Activated CD4-positive, alpha-beta memory T cell treated with anti-CD3 and anti-CD28 coated beads for 36 hours (primary cell): ENCODE measurements at regions of chr22 and their contacts with region 1.

Region 1: DNA sequence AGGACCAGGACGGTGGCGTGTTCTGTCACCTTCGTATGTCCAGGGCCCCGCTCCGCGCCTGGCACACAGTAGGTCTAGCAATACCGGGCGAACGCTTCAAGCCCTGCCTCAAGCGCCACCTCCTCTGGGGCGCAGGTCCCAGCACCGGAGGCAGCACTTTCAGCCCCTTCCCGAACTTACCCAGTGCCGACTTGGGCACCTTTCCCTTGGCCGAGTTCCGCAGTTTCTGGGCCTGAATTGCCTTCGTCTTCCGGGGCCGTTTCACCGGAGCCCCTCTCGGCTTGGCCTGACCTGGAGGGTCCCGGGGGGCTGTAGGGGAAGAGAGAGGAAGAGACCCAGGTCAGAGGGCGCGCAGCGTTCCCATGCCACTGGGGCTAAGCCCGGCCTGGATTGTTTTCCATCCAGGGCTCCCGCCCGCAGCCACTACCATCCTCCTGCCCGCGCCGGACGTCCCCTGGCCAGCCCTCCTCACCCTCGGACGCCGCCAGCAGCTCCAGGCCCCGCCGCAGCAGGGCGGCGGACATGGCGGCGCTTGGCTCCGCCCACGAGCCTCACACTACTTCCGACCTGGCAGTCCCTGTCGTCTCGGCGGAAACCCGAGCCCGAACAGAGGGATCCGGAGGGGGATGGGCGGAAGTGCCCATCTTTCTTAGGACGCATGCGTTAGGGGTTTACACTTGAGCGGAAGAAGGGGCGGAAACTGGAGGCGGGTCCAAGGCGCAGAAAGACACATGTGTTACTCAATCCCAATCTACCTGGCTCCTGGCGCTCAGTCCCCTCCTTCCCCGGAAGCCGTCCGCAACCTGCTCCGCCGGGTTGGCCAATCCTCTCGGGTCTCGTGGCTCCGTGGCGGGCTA is at the start of gene RPS19BP1:
- DNase-seq: peak; percentile 100
- H3K4me3 Mint-ChIP-seq: peak within 1 kb of the TSS; percentile 91
- H3K27ac Mint-ChIP-seq: peak within 1 kb of the TSS; percentile 80
- H3K4me1 Mint-ChIP-seq: peaks cover 58% of the 10 kb centered on the region
- H3K27me3 Mint-ChIP-seq: no peaks in the 10 kb centered on the region
- total RNA-seq, gene RPS19BP1: 65.2 to 67.5 TPM

Region 2: DNA sequence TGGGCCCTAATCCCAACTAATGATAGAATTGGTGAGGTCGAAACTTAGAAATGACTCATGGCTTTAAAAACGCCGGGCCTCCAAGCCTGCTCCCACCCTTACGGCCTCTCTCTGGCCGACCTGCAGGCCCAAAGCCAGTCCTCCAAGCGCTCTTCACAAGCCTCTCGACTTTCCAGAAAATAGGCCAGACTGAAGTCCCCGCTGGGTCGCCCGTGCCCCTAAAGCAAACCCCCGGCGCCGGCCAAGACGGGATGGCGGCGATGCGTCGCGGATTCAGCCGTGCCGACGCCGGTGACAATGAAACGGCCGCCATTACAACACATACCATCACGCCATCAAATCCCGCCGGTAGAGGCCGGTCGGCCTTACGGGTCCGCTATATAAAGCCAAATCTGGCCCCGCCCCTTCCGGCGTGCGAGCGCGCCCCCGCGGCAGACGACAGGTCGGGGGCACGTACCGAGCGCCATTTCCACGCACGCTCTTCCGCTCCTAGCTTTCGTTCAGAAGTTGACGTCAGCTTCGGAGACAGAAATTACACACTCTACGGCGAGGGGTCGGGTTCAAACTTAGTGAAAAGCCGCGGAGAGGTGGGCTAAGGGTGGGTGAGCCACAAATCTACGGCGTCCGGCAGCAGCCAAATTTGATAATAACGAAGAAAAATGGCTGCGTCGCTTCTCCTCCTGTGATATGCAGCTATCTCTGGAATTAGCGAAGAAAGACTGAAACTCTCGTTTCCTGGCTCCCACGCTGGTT is 213.0 kb before region 1 on chr22 and contains the start of gene RPL3:
- CTCF ChIA-PET with region 1: interaction called, 32 read pairs
- POLR2A ChIA-PET with region 1: interaction called, 12 read pairs
- intact Hi-C with region 1: no loop called
- DNase-seq: peak; percentile 97
- H3K4me3 Mint-ChIP-seq: peak within 1 kb of the TSS; percentile 100
- H3K27ac Mint-ChIP-seq: peak within 1 kb of the TSS; percentile 99
- H3K4me1 Mint-ChIP-seq: peaks cover 37% of the 10 kb centered on the region
- H3K27me3 Mint-ChIP-seq: no peaks in the 10 kb centered on the region
- total RNA-seq, gene RPL3: 2,986 to 3,013 TPM

Region 3: DNA sequence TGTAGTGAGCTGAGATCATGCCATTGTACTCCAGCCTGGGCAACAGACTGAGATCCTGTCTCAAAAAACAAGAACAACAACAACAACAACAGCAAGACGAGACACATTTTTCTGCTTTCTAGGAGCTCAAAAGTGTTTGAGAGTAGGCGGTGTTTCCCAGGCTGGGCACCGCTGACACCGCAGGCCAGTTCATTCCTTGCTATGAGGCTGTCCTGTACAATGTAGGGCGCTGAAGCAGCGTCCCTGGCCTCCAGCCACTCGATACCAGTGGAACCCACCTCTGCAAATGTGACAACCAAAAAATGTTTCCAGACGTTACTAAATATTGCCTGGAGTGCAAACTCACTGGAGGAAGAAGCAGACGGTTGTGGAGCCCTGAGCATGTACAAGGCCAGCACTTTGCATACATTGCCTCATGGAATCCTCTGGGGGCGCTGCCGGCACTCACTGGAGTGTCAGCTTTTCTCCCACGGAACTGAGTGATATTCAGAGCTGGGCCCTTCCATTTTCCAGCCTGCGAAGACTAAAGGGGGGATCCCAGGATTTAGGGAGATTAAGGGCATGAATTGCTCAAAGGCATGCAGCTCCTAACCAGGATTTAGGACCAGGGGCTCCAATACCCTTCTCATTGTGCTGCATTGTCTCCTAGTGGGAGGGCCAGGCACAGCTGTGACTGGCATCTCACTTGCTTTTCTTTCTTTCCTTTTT is 36.2 kb before region 1 on chr22:
- CTCF ChIA-PET with region 1: interaction called, 387 read pairs
- POLR2A ChIA-PET with region 1: interaction called, 8 read pairs
- intact Hi-C with region 1: loop called (anchors 1 kb)
- DNase-seq: peak; percentile 76
- H3K4me3 Mint-ChIP-seq: no peak overlapping the region
- H3K27ac Mint-ChIP-seq: no peak overlapping the region
- H3K4me1 Mint-ChIP-seq: peaks cover 9% of the 10 kb centered on the region
- H3K27me3 Mint-ChIP-seq: no peaks in the 10 kb centered on the region

Region 4: DNA sequence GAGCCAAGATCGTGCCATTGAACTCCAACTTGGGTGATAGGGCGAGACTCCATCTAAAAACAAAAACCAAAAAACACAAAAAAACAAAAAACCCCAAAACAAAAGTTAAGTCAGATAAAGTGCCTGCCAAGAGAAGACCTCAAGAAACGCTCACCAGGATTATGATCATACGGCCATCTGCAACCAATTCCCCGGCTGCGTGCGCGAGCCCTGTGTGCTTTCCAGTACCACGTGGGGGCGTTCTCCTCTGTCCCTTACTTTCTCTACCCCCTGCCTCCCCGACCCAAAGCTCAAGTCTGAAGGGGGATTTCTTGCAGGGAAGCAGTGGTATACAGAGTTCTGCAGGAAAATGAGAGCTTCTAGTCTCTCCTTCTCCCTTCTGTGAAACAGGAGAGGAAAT is 10.7 kb after region 1 on chr22:
- CTCF ChIA-PET with region 1: interaction called, 12 read pairs
- POLR2A ChIA-PET with region 1: no interaction called
- intact Hi-C with region 1: no loop called
- DNase-seq: peak; percentile 50
- H3K4me3 Mint-ChIP-seq: no peak overlapping the region
- H3K27ac Mint-ChIP-seq: no peak overlapping the region
- H3K4me1 Mint-ChIP-seq: peaks cover 14% of the 10 kb centered on the region
- H3K27me3 Mint-ChIP-seq: peaks cover 28% of the 10 kb centered on the region

Region 5: DNA sequence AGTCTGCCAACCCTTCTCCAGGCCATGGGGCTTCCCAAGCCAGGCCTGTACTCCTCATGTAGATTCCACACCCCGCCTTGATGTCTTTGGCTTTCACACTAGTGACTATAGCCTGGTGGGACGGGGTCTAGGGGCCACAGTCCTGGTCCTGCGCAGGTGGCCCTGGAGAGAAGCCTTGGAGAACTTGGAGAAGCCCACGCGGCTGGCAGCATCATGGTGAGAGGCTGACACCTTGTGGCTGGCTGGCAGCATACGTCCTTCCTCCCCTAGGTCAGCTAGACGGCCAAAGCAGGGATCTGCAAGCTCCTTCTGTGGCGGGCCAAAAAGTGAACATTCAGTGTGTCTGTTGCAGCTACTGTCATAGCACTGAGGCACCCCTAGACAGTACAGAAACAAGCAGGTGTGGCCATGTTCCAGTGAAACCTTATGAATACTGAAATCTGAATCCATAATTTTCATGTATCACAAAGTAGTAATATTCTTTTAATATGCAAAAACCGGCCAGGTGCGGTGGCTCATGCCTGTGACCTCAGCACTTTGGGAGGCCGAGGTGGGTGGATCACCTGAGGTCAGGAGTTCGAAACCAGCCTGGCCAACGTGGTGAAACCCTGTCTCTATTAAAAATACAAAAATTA is 504.3 kb after region 1 on chr22:
- CTCF ChIA-PET with region 1: interaction called, 56 read pairs
- POLR2A ChIA-PET with region 1: interaction called, 3 read pairs
- intact Hi-C with region 1: loop called (anchors 5 kb)
- DNase-seq: peak; percentile 76
- H3K4me3 Mint-ChIP-seq: no peak overlapping the region
- H3K27ac Mint-ChIP-seq: no peak overlapping the region
- H3K4me1 Mint-ChIP-seq: no peaks in the 10 kb centered on the region
- H3K27me3 Mint-ChIP-seq: peaks cover 10% of the 10 kb centered on the region